HCT116 (cell line): ENCODE measurements at regions of chr11 and their contacts with region 1.

Region 1: GRCh38 chr11:73307323-73308002 is 613 bp upstream of the ARHGEF17 start:
- DNase-seq: peak; percentile 95
- ATAC-seq: peak; percentile 70
- H3K4me3 ChIP-seq: peak overlapping the region; percentile 59 to 77
- H3K27ac ChIP-seq: peak overlapping the region; percentile 92
- H3K4me1 ChIP-seq: peaks cover 13 to 34% of the 10 kb centered on the region in 2 experiments
- H3K27me3 ChIP-seq: no peaks in the 10 kb centered on the region
- CTCF ChIP-seq: peak; percentile 81 to 97 (median 89)
- POLR2A ChIP-seq: peak; percentile 40
- RAD21 ChIP-seq: peak; percentile 96

Region 2: DNA sequence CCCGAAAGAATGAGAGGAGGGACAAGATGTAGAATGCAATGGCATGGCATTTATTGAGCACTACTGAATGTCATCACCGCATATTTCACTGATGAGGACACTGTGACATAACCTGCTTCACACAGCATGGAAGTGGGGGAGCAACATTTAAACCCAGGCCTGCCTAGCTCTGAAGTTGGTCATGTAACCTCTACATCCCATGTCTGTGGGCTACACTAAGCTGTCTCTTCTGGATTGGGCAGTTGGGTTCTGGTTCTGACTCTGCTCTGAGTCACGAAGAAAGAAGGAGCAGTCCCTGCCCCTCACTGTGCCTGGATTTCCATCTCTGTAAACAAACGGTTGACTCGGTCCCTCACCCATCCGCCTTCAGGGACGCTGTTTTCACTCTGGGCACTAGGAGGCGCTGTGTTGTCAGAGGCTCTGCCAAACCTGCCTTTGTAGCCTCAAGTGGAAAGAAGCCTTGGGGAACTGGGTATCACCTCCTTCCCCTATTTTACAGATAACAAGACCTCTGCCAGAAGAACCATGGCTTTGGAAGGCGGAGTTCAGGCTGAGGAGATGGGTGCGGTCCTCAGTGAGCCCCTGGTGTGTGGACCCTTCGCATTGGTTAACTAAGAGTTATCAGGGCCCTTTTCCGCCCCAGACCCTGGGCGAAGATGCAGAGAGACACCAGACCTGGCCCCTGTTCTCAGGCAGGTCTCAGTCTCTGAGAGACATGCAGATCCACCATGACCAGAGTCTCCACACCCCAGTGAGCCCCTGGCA is 12.1 kb before region 1 on chr11:
- CTCF ChIA-PET with region 1: interaction called, 23 read pairs
- POLR2A ChIA-PET with region 1: interaction called, 4 read pairs
- RAD21 ChIA-PET with region 1: no interaction called
- intact Hi-C with region 1: no loop called
- DNase-seq: peak; percentile 43
- ATAC-seq: peak; percentile 89
- H3K4me3 ChIP-seq: no peak overlapping the region
- H3K27ac ChIP-seq: no peak overlapping the region
- H3K4me1 ChIP-seq: peaks cover 0 to 7% of the 10 kb centered on the region in 2 experiments; a peak in 2 of 4 replicates
- H3K27me3 ChIP-seq: no peaks in the 10 kb centered on the region; the same call in 1 of the 2 replicates
- CTCF ChIP-seq: peak; percentile 82 to 99 (median 99)
- POLR2A ChIP-seq: no peak
- RAD21 ChIP-seq: peak; percentile 66

Region 3: DNA sequence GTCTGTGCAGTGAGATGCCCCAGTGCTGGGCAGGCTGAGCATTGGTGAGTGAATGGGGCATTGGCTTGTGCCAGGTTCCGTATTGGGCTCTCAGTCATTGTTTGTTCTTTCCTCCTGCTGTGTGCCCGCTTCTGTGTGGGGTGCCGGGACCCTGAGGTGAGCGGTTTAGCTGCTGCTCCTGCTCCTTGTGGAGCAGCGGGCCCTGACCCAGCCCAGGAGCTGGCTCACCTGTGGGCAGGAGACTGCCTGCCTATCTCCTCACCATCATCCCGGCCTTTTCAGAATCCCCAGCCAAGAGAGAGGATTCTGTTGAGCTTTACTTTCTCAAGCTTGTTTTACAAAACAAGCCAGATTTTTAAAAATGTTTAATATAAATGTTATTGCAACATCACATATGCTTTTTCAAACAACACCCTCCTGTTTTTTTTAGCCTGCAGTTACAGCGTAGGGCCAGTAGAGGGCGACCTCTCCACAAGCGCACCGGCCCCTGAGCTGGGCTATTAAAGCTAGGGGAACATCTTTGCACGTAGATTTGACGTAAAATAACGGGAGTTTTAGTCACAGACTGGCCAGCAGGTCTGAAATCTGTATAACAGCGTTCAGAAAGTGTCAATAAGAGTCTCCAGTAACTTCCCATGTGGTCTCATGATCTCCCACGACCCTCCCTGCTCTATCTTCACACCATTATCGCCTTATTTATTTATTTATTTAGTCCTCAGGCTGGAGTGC is 43.6 kb after region 1 on chr11:
- CTCF ChIA-PET with region 1: interaction called, 39 read pairs
- POLR2A ChIA-PET with region 1: no interaction called
- RAD21 ChIA-PET with region 1: interaction called, 3 to 5 read pairs
- intact Hi-C with region 1: no loop called
- DNase-seq: peak; percentile 41
- ATAC-seq: peak; percentile 85
- H3K4me3 ChIP-seq: no peak overlapping the region
- H3K27ac ChIP-seq: no peak overlapping the region
- H3K4me1 ChIP-seq: no peaks in the 10 kb centered on the region
- H3K27me3 ChIP-seq: no peaks in the 10 kb centered on the region
- CTCF ChIP-seq: peak; percentile 88 to 97 (median 97); a peak in 5 of 6 replicates
- POLR2A ChIP-seq: no peak
- RAD21 ChIP-seq: peak; percentile 84

Region 4: GRCh38 chr11:73393479-73394380 is 86.3 kb after region 1 on chr11:
- CTCF ChIA-PET with region 1: interaction called, 35 read pairs
- POLR2A ChIA-PET with region 1: interaction called, 5 read pairs
- RAD21 ChIA-PET with region 1: interaction called, 3 read pairs
- intact Hi-C with region 1: loop called (anchors 1 kb)
- DNase-seq: peak; percentile 41
- ATAC-seq: peak; percentile 90
- H3K4me3 ChIP-seq: no peak overlapping the region
- H3K27ac ChIP-seq: no peak overlapping the region
- H3K4me1 ChIP-seq: peaks cover 0 to 5% of the 10 kb centered on the region in 2 experiments; a peak in 1 of 4 replicates
- H3K27me3 ChIP-seq: no peaks in the 10 kb centered on the region
- CTCF ChIP-seq: peak; percentile 80 to 81 (median 80)
- POLR2A ChIP-seq: no peak
- RAD21 ChIP-seq: peak; percentile 87